AG04450 (cell line): ENCODE measurements at regions of chr17 and their contacts with region 1.

Region 1: GRCh38 chr17:75779231-75779986 is 5.2 kb upstream of the UNK start:
- DNase-seq: peak; percentile 99
- H3K4me3 ChIP-seq: peak overlapping the region; percentile 90
- H3K27ac ChIP-seq: peak overlapping the region; percentile 99
- H3K27me3 ChIP-seq: no peaks in the 10 kb centered on the region
- CTCF ChIP-seq: no peak

Region 2: GRCh38 chr17:75795820-75796607 is 16.6 kb after region 1 on chr17:
- CTCF ChIA-PET with region 1: interaction called, 13 read pairs
- POLR2A ChIA-PET with region 1: interaction called, 31 read pairs
- DNase-seq: no peak
- H3K4me3 ChIP-seq: no peak overlapping the region
- H3K27ac ChIP-seq: no peak overlapping the region
- H3K27me3 ChIP-seq: no peaks in the 10 kb centered on the region
- CTCF ChIP-seq: no peak

Region 3: DNA sequence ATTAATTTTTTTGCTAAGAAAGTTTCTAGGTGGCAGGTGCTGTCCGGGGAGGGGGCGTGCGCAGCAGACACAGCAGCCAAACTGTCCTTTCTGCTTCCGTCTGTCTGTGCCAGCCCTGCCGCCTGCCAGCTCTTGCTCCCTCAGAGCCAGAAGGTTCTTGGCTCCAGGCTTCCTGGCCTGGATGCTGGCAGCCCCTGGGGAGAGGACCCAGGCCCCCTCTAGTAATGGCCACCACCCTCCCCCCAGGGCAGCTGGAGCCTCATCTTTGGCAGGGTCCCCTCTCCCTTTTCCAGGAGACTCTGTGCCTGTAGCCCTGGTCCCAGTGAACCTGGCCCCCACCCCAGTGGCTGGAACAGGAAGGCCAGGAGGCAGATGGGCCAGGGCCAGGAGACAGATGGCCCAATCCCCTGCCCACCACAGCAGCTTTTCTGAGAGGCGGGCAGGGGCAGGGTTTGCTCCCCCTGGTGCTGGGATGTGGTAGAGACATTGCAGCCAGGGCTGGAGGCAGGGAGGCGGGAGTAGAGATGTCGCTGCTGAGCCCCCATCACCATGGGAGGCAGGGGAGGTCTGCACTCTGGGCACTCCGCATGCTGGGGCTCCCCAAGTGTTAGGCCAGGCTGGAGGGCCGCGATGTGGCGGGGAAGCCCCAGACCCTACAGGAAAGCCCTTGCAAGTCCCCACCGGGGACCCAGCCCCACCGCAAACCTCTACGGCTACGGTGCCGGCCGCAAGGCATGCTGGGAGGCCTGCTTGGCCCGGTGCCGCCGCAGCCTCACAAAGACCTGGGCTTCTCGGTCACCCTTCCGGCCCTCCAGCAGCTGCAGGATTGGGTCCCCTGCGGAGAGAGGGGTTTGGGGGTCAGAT is 48.1 kb after region 1 on chr17:
- CTCF ChIA-PET with region 1: interaction called, 13 read pairs
- POLR2A ChIA-PET with region 1: interaction called, 17 read pairs
- DNase-seq: no peak
- H3K4me3 ChIP-seq: peak overlapping the region; percentile 32
- H3K27ac ChIP-seq: peak overlapping the region; percentile 11
- H3K27me3 ChIP-seq: no peaks in the 10 kb centered on the region
- CTCF ChIP-seq: peak; percentile 77

Region 4: GRCh38 chr17:75864448-75864871 is 85.1 kb after region 1 on chr17:
- CTCF ChIA-PET with region 1: interaction called, 7 read pairs
- POLR2A ChIA-PET with region 1: interaction called, 10 read pairs
- DNase-seq: peak; percentile 82
- H3K4me3 ChIP-seq: no peak overlapping the region
- H3K27ac ChIP-seq: peak overlapping the region; percentile 25
- H3K27me3 ChIP-seq: no peaks in the 10 kb centered on the region
- CTCF ChIP-seq: 0 out of 2 replicates have a peak, but pooled peaks have one; percentile 13